ENCODE measurements at regions of chr19 and their contacts with region 1.

Region 1: GRCh38 chr19:6021878-6022569 is 44.1 kb upstream of the RANBP3 start:
- DNase-seq: peak; percentile 67 to 87 (median 82)
- H3K4me3 ChIP-seq: no peak overlapping the region
- H3K27ac ChIP-seq: no peak overlapping the region
- H3K4me1 ChIP-seq: peaks cover 3% of the 10 kb centered on the region
- H3K27me3 ChIP-seq: no peaks in the 10 kb centered on the region
- CTCF ChIP-seq: peak; percentile 68 to 85 (median 77)
- EP300 ChIP-seq: no peak
- POLR2A ChIP-seq: no peak

Region 2: GRCh38 chr19:5782945-5783934 is 238.8 kb before region 1 on chr19:
- intact Hi-C with region 1: loop called in 1 of 4 experiments (anchors 10 kb)
- DNase-seq: peak in 1 of 5 donors; percentile 25
- H3K4me3 ChIP-seq: no peak overlapping the region
- H3K27ac ChIP-seq: no peak overlapping the region
- H3K4me1 ChIP-seq: no peaks in the 10 kb centered on the region
- H3K27me3 ChIP-seq: no peaks in the 10 kb centered on the region
- CTCF ChIP-seq: no peak
- EP300 ChIP-seq: no peak
- POLR2A ChIP-seq: no peak

Region 3: GRCh38 chr19:5987077-5987818 is 34.8 kb before region 1 on chr19:
- intact Hi-C with region 1: loop called in 2 of 4 experiments (anchors 5 kb)
- DNase-seq: peak; percentile 66 to 83 (median 80)
- H3K4me3 ChIP-seq: peak overlapping the region; percentile 21
- H3K27ac ChIP-seq: no peak overlapping the region
- H3K4me1 ChIP-seq: peaks cover 1% of the 10 kb centered on the region
- H3K27me3 ChIP-seq: no peaks in the 10 kb centered on the region
- CTCF ChIP-seq: peak; percentile 75 to 91 (median 85)
- EP300 ChIP-seq: no peak
- POLR2A ChIP-seq: no peak